GM10248 (cell line): ENCODE measurements at regions of chr18 and their contacts with region 1.

Region 1: DNA sequence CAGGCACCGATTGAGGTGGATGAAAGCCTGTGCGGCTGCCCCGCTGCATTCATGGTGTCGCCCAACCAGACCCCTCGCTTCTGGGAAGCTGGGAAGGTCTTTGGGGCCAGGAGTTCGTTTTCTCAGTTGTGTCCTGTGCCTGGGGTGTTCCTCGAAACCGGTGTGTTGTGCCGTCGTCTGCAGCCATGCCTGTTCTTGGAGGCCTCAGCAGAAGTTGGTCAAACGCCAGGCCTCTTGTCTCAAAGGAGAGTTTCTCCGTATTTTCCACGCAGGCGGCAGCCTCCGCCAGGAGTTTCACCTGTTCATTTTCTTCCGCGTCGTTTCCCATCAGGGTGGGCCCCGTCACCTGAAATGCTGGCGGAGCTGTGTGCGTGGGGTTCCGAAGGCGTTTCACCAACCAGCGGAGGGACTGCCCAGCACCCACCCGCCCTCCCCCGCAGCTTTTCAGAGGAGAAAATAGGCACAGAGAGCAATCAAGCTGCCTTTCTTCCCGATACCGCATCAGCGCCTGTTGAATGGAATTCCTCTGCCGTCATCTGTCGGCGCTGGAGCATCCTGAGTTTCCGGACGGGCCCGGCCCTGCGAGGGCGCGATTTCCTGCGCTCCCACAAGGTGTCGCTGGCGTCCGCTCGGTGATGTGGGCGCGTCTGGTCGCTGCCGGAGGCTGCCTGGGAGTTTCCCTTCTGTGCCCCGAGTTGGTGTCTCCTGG is 17.0 kb upstream of the NFATC1 start:
- DNase-seq: peak; percentile 87
- CTCF ChIP-seq: peak; percentile 92

Region 2: DNA sequence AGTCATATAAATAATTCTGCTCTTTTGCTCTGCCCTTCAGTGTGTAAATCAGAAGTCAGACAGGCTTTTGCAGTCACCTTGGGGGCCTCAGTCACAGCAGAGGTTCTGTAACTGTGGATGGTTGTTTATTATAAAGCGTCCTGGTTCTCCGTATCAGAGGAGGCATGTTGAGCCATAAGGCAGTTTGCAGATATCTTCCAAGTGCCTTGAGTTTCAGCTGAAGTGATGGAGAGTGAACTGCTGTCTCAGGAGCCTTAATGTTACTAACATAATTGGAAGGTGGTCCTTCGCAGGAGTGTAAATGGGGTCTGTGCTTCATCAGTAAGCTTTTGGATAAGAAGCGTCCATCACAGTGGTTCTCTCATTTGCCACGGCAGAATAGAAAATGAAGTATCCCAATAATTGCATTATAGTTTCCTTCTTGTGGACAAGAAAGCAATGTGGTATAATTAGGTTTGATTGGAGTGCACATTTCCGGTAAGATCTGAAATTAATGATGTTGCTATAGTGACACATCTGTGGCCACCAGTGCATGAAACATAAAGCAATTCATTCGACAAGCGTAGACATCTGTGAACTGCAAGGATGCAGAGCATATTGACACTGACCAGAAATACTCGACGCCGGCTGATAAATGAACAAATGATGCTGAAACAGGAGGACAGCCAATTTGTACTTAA is 95.4 kb before region 1 on chr18:
- CTCF ChIA-PET with region 1: no interaction called
- POLR2A ChIA-PET with region 1: no interaction called
- DNase-seq: no peak
- CTCF ChIP-seq: no peak

Region 3: GRCh38 chr18:79393635-79394533 is 15.2 kb after region 1 on chr18:
- CTCF ChIA-PET with region 1: interaction called, 64 read pairs
- POLR2A ChIA-PET with region 1: no interaction called
- DNase-seq: peak; percentile 63
- CTCF ChIP-seq: no peak

Region 4: GRCh38 chr18:79528846-79529245 is 150.2 kb after region 1 on chr18:
- CTCF ChIA-PET with region 1: interaction called, 137 read pairs
- POLR2A ChIA-PET with region 1: no interaction called
- DNase-seq: peak; percentile 81
- CTCF ChIP-seq: peak; percentile 84

Region 5: GRCh38 chr18:79634593-79635426 is 256.1 kb after region 1 on chr18:
- CTCF ChIA-PET with region 1: interaction called, 78 read pairs
- POLR2A ChIA-PET with region 1: no interaction called
- DNase-seq: no peak
- CTCF ChIP-seq: no peak